IMR-90 (cell line): ENCODE measurements at regions of chr3 and their contacts with region 1.

Region 1: GRCh38 chr3:109297496-109297895 is 18.8 kb downstream of the DPPA2 start:
- DNase-seq: no peak
- ATAC-seq: no peak
- H3K4me3 ChIP-seq: no peak overlapping the region
- H3K27ac ChIP-seq: no peak overlapping the region
- H3K4me1 ChIP-seq: no peaks in the 10 kb centered on the region
- H3K27me3 ChIP-seq: no peaks in the 10 kb centered on the region
- CTCF ChIP-seq: no peak
- POLR2A ChIP-seq: no peak
- RAD21 ChIP-seq: no peak

Region 2: DNA sequence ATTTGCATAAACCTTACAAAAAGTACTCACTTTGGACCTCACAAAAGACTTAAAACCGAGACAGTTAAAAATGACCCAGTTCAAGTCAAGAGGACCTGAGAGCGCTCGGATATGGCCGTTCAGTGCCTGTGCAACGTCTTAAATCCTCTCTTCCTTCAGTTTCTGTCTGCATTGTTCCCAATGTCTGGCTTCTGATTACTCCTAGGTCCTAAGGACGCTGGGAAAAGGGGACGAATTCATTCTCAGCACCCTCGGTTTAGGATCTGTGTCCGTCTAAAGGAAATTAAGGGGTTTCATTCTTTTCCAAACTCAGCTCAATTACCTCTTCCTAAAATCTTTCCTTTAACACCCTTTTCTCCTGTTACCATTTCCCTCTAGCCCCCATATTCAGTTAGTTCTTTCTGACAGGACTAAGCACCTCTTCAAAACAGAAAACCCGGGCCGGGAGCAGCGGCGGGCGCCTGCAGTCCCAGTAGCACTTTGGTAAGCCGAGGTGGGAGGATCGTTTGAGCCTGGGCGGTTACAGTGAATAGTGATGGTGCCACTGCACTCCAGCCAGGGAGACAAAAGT is 38.9 kb after region 1 on chr3:
- CTCF ChIA-PET with region 1: no interaction called
- POLR2A ChIA-PET with region 1: no interaction called
- dilution Hi-C with region 1: no loop called
- in situ Hi-C with region 1: no loop called
- intact Hi-C with region 1: no loop called
- DNase-seq: peak; percentile 7
- ATAC-seq: peak; percentile 92
- H3K4me3 ChIP-seq: peak overlapping the region; percentile 24
- H3K27ac ChIP-seq: no peak overlapping the region
- H3K4me1 ChIP-seq: no peaks in the 10 kb centered on the region
- H3K27me3 ChIP-seq: no peaks in the 10 kb centered on the region
- CTCF ChIP-seq: no peak
- POLR2A ChIP-seq: no peak
- RAD21 ChIP-seq: no peak

Region 3: GRCh38 chr3:109413049-109413448 is 115.6 kb after region 1 on chr3:
- CTCF ChIA-PET with region 1: no interaction called
- POLR2A ChIA-PET with region 1: no interaction called
- dilution Hi-C with region 1: no loop called
- in situ Hi-C with region 1: loop called (anchors 10 kb)
- intact Hi-C with region 1: no loop called
- DNase-seq: no peak
- ATAC-seq: no peak
- H3K4me3 ChIP-seq: no peak overlapping the region
- H3K27ac ChIP-seq: no peak overlapping the region
- H3K4me1 ChIP-seq: no peaks in the 10 kb centered on the region
- H3K27me3 ChIP-seq: no peaks in the 10 kb centered on the region
- CTCF ChIP-seq: no peak
- POLR2A ChIP-seq: no peak
- RAD21 ChIP-seq: no peak

Region 4: GRCh38 chr3:109460961-109461360 is 163.5 kb after region 1 on chr3:
- CTCF ChIA-PET with region 1: no interaction called
- POLR2A ChIA-PET with region 1: no interaction called
- dilution Hi-C with region 1: no loop called
- in situ Hi-C with region 1: no loop called
- intact Hi-C with region 1: no loop called
- DNase-seq: no peak
- ATAC-seq: no peak
- H3K4me3 ChIP-seq: no peak overlapping the region
- H3K27ac ChIP-seq: no peak overlapping the region
- H3K4me1 ChIP-seq: no peaks in the 10 kb centered on the region
- H3K27me3 ChIP-seq: no peaks in the 10 kb centered on the region
- CTCF ChIP-seq: no peak
- POLR2A ChIP-seq: no peak
- RAD21 ChIP-seq: no peak